GM10248 (cell line): ENCODE measurements at regions of chr2 and their contacts with region 1.

Region 1: DNA sequence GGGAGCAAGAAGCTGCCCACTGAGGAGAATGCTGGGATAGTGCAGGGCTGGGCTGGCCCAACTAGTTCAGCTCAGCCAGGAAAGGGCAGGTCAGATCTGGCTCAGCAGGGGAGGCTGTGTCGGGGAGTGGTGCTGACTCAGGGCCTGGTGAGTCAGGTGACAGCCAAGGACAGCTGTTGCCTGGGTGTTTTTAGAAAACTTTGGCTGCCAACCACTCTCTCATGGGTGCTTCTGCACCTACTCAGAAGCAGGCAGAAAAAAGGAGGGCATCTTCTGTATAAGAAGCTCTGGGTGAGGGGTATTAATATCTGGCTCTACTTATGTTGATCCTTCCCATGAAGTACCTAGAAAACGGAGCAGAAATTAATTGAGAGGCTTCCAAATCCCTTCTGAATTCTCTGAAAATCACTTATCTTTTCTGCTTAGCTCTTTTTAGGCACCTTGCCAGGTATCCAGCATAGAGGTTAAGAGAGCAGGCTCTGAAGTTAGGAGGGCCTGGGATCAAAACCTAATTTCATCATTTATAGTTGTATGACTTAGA is 15.6 kb upstream of the RAB10 start:
- DNase-seq: no peak
- CTCF ChIP-seq: no peak

Region 2: GRCh38 chr2:25926984-25927756 is 91.1 kb before region 1 on chr2:
- CTCF ChIA-PET with region 1: no interaction called
- POLR2A ChIA-PET with region 1: no interaction called
- DNase-seq: no peak
- CTCF ChIP-seq: no peak

Region 3: DNA sequence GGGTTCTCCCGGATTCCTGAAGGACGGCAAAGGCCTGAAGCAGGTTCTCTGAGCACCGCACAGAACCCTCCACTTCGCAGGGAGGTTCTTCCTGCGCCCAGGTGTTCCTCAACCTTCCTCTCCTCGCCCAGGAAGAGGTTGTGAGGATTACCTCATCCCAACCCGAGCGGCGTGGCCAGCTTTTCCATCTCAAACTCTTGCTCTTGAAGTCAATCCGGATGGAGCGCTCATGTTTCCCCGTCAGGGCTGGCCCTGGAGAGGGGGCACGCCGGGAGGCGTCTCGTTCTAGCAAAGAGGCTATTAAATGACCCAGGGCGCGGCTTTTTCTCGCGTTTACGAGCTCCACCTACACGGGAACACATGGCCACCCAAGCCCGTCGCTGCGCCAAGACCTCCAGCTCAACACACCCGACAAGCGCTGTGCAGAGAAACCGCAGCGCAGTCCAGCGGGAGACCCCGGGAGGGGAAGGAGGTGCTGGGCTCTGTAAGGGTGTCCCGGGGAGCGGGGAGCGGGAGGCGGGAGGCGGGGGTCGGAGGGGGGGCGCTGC is 15.1 kb after region 1 on chr2:
- CTCF ChIA-PET with region 1: interaction called, 10 read pairs
- POLR2A ChIA-PET with region 1: no interaction called
- DNase-seq: peak; percentile 45
- CTCF ChIP-seq: no peak